Activated B cell treated with CpG ODN at 0.5 μM for 24 hours (primary cell): ENCODE measurements at regions of chr10 and their contacts with region 1.

Region 1: GRCh38 chr10:70169649-70170364 is 507 bp downstream of the SAR1A start:
- DNase-seq: no peak
- ATAC-seq: peak; percentile 29
- H3K4me3 Mint-ChIP-seq: peak overlapping the region; percentile 94
- H3K27ac Mint-ChIP-seq: peak overlapping the region; percentile 93
- H3K4me1 Mint-ChIP-seq: peaks cover 43% of the 10 kb centered on the region
- H3K27me3 Mint-ChIP-seq: no peaks in the 10 kb centered on the region
- CTCF ChIP-seq: no peak

Region 2: GRCh38 chr10:69179743-69180524 is 989.9 kb before region 1 on chr10 and contains the start of gene SUPV3L1:
- CTCF ChIA-PET with region 1: no interaction called
- POLR2A ChIA-PET with region 1: no interaction called
- intact Hi-C with region 1: no loop called
- DNase-seq: peak; percentile 87
- ATAC-seq: peak; percentile 87
- H3K4me3 Mint-ChIP-seq: peak within 1 kb of the TSS; percentile 95
- H3K27ac Mint-ChIP-seq: peak within 1 kb of the TSS; percentile 100
- H3K4me1 Mint-ChIP-seq: peaks cover 39% of the 10 kb centered on the region
- H3K27me3 Mint-ChIP-seq: no peaks in the 10 kb centered on the region
- CTCF ChIP-seq: no peak
- total RNA-seq, gene SUPV3L1: 38.7 and 49.1 TPM in 2 replicates

Region 3: DNA sequence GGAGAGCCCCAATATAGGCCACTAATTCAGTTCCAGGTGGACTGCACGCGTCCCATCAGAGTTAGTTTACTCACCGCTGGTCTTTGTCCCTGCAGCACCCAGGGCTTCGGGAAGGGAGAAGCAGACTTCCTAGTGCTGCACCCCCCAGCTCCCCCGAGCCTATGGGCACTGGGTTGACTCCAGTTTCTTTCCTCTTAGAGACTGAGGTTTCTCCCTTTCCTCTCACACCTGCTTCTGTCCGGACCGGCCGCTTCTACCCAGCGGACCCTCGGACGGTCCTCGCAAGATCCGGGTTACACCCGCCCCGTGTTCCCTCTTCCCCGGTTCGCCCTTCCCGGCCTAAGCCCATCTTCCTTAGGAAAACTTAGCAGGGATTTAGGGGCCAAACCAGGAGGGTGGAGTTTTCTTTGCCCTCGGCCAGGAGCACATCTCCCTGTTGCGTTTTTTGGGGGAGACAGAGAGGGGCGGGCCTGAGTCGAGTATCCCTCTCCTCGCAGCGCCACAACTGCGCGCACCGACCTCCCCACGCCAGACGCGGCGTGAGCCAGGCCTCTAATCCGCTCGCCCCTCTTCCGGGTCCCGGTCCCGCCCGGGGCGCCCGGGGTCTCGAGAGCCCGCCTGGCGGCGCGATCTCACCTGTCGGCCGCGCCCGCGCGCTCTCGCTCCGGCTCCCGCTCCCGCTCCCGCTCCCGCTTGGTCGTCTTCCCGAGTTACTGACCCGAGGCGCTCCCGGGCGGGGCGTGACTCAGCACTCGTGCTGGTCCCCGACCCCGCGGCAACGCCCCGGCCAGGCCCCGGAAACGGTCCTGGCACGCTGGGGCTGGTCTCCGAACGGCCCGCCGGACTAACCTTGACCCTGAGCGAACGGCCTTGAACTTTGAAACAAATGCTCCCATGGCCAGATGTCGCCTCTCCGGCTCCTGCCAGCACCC is 37.4 kb before region 1 on chr10 and contains the start of gene AIFM2:
- CTCF ChIA-PET with region 1: no interaction called
- POLR2A ChIA-PET with region 1: interaction called, 6 read pairs
- intact Hi-C with region 1: loop called (anchors 5 kb)
- DNase-seq: peak; percentile 55
- ATAC-seq: peak; percentile 87
- H3K4me3 Mint-ChIP-seq: peak within 1 kb of the TSS; percentile 90
- H3K27ac Mint-ChIP-seq: peak within 1 kb of the TSS; percentile 82
- H3K4me1 Mint-ChIP-seq: peaks cover 19% of the 10 kb centered on the region
- H3K27me3 Mint-ChIP-seq: no peaks in the 10 kb centered on the region
- CTCF ChIP-seq: no peak
- total RNA-seq, gene AIFM2: 8.9 and 10.8 TPM in 2 replicates